ENCODE measurements at regions of chr18 and their contacts with region 1.

Region 1: DNA sequence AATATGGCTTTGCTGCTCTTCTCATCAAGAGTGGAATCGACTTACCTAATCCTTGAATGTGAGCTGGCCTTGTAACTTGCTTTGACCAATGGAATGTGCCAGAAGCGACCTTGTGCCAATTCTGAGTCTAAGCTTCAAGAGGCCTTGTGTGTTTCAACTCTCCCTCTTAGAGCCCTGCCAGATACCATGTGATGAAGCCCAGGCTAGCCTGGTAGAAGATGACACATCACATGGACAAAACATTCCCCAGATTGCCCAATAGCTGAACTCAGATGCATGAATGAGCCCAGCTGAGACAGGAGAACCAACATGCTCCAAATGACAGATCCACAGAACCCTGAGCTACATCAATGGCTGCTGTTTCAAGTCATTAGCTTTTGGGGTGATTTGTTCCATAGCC is 4.2 kb upstream of the KLHL14 start:
- DNase-seq: no peak
- ATAC-seq: no peak
- H3K4me3 ChIP-seq: no peak overlapping the region
- H3K27ac ChIP-seq: no peak overlapping the region
- H3K4me1 ChIP-seq: peaks cover 3% of the 10 kb centered on the region
- H3K27me3 ChIP-seq: no peaks in the 10 kb centered on the region
- CTCF ChIP-seq: no peak
- POLR2A ChIP-seq: no peak

Region 2: GRCh38 chr18:30999186-30999585 is 1777.9 kb before region 1 on chr18:
- intact Hi-C with region 1: no loop called
- DNase-seq: no peak
- ATAC-seq: no peak
- H3K4me3 ChIP-seq: no peak overlapping the region
- H3K27ac ChIP-seq: no peak overlapping the region
- H3K4me1 ChIP-seq: no peaks in the 10 kb centered on the region
- H3K27me3 ChIP-seq: no peaks in the 10 kb centered on the region
- CTCF ChIP-seq: peak in 5 of 7 experiments; percentile 21 to 35 (median 33)
- POLR2A ChIP-seq: no peak

Region 3: GRCh38 chr18:32724071-32724696 is 52.9 kb before region 1 on chr18:
- intact Hi-C with region 1: loop called (anchors 10 kb)
- DNase-seq: no peak
- ATAC-seq: no peak
- H3K4me3 ChIP-seq: no peak overlapping the region
- H3K27ac ChIP-seq: no peak overlapping the region
- H3K4me1 ChIP-seq: no peaks in the 10 kb centered on the region
- H3K27me3 ChIP-seq: no peaks in the 10 kb centered on the region
- CTCF ChIP-seq: no peak
- POLR2A ChIP-seq: no peak

Region 4: DNA sequence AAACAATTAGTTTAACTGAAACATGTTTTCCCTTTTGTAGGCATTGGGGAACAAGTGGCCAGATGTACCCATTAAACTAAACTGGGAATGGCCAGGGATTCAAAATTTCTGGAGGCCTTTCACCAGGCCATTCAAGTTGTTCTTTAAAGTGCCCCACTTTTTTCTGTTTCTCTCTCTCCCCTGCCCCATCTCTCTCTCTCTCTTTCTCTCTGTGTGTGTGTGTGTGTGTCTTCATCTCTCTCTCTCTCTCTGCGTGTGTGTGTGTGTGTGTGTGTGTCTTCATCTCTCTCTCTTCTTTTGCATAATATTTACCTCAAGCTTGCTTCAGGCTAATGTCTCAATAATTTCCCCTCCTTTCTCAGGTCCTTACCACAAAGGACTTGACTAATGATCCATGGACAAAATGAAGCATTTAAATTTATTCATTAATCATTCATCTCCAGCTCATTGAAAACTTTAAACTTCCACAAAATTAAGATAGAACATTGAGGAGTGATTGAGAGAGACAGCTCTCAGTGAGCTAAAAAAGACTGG is 160.0 kb after region 1 on chr18:
- intact Hi-C with region 1: no loop called
- DNase-seq: no peak
- ATAC-seq: no peak
- H3K4me3 ChIP-seq: no peak overlapping the region
- H3K27ac ChIP-seq: no peak overlapping the region
- H3K4me1 ChIP-seq: no peaks in the 10 kb centered on the region
- H3K27me3 ChIP-seq: no peaks in the 10 kb centered on the region
- CTCF ChIP-seq: no peak
- POLR2A ChIP-seq: no peak

Measured in body of pancreas (tissue), 4 donors.